Body of pancreas (tissue), 4 donors: ENCODE measurements at regions of chr11 and their contacts with region 1.

Region 1: GRCh38 chr11:3775736-3776406 is 21.5 kb downstream of the NUP98 start:
- DNase-seq: no peak
- ATAC-seq: no peak
- H3K4me3 ChIP-seq: no peak overlapping the region
- H3K27ac ChIP-seq: no peak overlapping the region
- H3K4me1 ChIP-seq: no peaks in the 10 kb centered on the region
- H3K27me3 ChIP-seq: no peaks in the 10 kb centered on the region
- CTCF ChIP-seq: no peak
- POLR2A ChIP-seq: no peak

Region 2: DNA sequence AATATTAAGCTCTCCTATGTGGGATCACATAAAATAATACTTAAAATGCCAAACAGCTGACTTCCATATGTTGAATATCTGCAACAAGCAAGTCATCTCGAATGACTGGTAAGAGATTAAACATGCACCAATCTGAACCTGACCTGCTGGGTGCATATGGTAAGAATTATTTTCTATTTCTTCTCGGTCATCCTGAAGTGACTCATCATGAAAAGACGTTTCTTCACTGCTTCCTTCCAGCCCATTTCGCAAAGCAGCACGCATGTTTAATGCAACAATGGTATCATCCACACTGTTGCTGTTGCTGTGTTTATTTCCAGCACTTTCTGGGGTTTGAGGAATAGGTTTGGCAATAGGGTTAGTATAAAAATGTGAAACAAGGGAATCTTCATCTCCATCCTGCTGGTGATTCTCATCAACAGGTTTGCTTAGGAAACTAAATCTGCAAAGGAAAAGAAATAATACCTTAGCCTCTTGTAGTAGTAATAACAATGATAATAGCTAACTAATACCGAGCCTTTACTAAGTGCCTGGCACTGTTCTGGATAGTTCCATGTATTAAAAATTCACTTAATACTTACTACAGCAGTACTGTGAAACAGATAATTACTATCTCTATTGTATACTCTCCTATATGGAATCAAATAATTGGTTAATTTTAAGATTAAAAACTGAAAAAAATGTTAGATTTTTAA is 52.7 kb before region 1 on chr11:
- intact Hi-C with region 1: loop called (anchors 10 kb)
- DNase-seq: peak in 1 of 4 donors; percentile 27
- ATAC-seq: no peak
- H3K4me3 ChIP-seq: no peak overlapping the region
- H3K27ac ChIP-seq: no peak overlapping the region
- H3K4me1 ChIP-seq: no peaks in the 10 kb centered on the region
- H3K27me3 ChIP-seq: no peaks in the 10 kb centered on the region
- CTCF ChIP-seq: no peak
- POLR2A ChIP-seq: no peak